ENCODE measurements at regions of chr20 and their contacts with region 1.

Region 1: GRCh38 chr20:50395258-50395729 is 114.9 kb upstream of the PTPN1 start:
- DNase-seq: no peak
- H3K4me3 ChIP-seq: no peak overlapping the region
- H3K27ac ChIP-seq: peak overlapping the region; percentile 63 to 87 (median 78)
- H3K4me1 ChIP-seq: peaks cover 3 to 40% (median 27%) of the 10 kb centered on the region in 3 donors
- H3K27me3 ChIP-seq: no peaks in the 10 kb centered on the region
- CTCF ChIP-seq: no peak
- POLR2A ChIP-seq: peak in 1 of 4 donors; percentile 28

Region 2: DNA sequence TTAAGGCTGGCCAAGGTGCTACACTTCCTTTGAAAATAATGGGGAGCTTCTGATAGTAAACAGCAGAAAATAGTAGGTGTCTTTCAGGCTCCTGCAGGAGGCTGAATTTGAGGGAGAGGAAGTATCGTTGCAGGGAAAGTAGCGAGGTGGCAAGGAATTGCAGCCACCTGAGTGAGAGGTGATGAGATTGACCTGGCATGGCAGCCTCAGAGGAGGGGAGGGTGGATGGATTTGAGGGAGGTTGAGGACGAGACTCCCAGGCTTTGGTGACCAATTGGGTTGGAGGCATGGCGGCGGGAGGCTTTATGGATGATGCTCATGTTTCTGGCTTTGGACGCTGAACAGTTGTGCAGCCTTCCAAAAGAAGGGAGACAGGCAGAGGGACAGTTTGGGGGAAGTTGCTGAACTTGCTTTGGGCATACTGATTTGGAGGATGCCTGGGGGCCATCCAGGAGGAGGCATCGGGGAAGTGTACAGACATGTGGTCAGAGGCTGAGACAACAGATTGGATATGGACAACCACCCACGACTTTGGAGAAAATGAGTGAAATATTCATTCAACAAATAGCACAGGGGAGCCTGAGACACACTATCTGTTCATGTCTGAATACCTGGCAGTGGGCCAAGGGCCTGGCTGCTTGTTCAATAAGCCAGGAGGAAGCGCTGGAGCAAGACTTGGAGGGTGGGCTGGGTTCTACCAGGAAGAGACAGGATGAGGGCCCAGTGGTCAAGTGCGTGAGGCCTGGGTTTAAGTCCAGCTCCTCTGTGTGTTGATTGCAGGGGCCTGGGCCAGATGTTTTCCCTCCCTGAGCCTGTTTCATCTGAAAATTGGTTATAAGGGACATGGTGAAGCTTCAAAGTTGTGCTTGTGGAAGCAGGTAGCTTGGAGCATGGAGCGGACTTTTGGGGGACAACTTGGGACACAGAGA is 91.5 kb before region 1 on chr20:
- intact Hi-C with region 1: no loop called
- DNase-seq: no peak
- H3K4me3 ChIP-seq: no peak overlapping the region
- H3K27ac ChIP-seq: peak overlapping the region; percentile 46 to 94 (median 86)
- H3K4me1 ChIP-seq: peaks cover 30 to 59% (median 50%) of the 10 kb centered on the region in 3 donors
- H3K27me3 ChIP-seq: no peaks in the 10 kb centered on the region
- CTCF ChIP-seq: no peak
- POLR2A ChIP-seq: no peak

Region 3: DNA sequence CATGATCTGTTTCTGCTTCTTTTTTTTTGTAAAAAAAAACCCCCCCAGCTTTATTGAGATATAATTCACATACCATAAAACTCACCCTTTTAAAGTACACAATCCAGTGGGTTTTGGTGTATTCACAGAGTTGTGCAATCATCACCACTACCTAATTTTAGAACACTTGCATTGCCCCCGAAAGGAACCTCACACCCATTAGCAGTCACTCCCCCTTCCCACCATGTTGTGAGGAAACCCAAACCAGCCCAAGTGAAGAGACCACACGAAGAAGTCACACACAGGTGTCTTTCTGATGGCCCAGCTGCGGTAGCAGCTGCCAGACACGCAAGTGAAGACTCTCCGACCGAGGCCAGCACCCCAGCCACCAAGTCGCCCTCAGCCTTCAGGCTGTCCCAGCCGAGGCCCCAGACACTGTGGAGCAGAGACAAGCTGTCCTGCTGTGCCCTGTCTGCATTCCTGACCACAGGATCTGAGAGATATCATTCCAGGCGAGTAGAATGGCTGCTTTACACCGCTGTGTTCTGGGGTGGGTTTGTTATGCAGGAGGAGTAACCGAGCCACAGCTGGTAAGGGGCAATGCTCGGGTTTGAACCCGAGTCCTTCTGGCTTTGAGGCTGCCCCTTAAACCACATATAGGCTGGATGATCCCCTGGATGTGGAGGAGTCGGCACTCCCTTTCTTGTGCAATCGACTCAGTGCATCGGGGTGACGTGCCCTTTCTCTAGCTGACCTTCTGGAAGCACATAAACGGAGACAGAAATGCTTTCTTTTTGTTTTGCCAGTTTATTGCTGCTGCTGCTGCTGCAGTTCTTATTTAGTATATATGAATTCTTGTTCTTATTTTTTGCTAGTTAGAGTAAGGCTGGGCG is 55.8 kb after region 1 on chr20:
- intact Hi-C with region 1: loop called (anchors 10 kb)
- DNase-seq: no peak
- H3K4me3 ChIP-seq: peak overlapping the region in 1 of 4 donors; percentile 39
- H3K27ac ChIP-seq: peak overlapping the region in 3 of 4 donors; percentile 62 to 71 (median 70)
- H3K4me1 ChIP-seq: peaks cover 9 to 20% (median 18%) of the 10 kb centered on the region in 3 donors
- H3K27me3 ChIP-seq: no peaks in the 10 kb centered on the region
- CTCF ChIP-seq: no peak
- POLR2A ChIP-seq: no peak

Region 4: GRCh38 chr20:50610221-50610620 is 214.9 kb after region 1 on chr20:
- intact Hi-C with region 1: no loop called
- DNase-seq: no peak
- H3K4me3 ChIP-seq: no peak overlapping the region
- H3K27ac ChIP-seq: no peak overlapping the region
- H3K4me1 ChIP-seq: no peaks in the 10 kb centered on the region
- H3K27me3 ChIP-seq: no peaks in the 10 kb centered on the region
- CTCF ChIP-seq: peak in 1 of 6 experiments; percentile 13
- POLR2A ChIP-seq: no peak

Measured in esophagus squamous epithelium (tissue), 5 donors.